PC-3 (cell line): ENCODE measurements at regions of chr2 and their contacts with region 1.

Region 1: DNA sequence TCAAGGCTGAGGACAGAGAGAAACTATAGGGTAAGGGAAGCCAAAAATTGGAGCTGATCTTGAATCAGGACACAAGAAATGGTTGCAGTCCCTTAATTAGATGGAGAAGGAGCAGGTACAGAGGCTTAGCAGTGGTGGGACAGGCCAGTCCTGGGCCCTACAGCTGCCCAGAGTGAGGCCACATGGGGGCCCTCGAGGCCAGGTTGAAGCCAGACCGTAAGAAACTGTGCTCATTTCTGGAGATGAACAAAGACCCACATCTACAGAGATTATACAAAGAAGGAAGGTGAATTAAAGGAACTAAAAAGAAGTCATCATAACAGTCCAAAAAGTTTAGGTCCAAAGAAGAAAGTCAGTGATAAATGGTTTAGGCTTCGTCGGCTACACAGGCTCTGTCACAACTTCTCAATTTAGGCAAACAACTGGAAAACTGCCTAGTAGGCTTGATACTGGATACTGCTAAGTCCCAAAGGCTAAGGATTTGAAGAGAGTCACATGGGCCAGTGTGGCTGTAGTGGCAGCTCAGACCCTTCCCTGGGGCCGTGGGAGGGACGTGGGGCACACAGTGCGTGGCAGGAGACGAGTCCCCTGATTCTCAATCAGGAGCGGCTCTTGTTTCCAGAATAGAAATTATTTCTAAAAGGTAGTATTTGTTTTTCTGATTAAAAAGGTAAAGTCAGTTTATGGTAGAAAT is 50.4 kb upstream of the CNGA3 start:
- DNase-seq: no peak
- ATAC-seq: peak; percentile 66
- H3K4me3 ChIP-seq: no peak overlapping the region
- H3K27ac ChIP-seq: no peak overlapping the region
- H3K4me1 ChIP-seq: peaks cover 21% of the 10 kb centered on the region
- H3K27me3 ChIP-seq: no peaks in the 10 kb centered on the region
- CTCF ChIP-seq: peak; percentile 50

Region 2: GRCh38 chr2:98356729-98357128 is 60.9 kb after region 1 on chr2:
- CTCF ChIA-PET with region 1: no interaction called
- POLR2A ChIA-PET with region 1: no interaction called
- intact Hi-C with region 1: loop called (anchors 10 kb)
- DNase-seq: peak; percentile 94
- ATAC-seq: peak; percentile 88
- H3K4me3 ChIP-seq: peak overlapping the region; percentile 13; the same call in 1 of the 2 replicates
- H3K27ac ChIP-seq: peak overlapping the region; percentile 81
- H3K4me1 ChIP-seq: peaks cover 31% of the 10 kb centered on the region
- H3K27me3 ChIP-seq: no peaks in the 10 kb centered on the region
- CTCF ChIP-seq: no peak

Region 3: DNA sequence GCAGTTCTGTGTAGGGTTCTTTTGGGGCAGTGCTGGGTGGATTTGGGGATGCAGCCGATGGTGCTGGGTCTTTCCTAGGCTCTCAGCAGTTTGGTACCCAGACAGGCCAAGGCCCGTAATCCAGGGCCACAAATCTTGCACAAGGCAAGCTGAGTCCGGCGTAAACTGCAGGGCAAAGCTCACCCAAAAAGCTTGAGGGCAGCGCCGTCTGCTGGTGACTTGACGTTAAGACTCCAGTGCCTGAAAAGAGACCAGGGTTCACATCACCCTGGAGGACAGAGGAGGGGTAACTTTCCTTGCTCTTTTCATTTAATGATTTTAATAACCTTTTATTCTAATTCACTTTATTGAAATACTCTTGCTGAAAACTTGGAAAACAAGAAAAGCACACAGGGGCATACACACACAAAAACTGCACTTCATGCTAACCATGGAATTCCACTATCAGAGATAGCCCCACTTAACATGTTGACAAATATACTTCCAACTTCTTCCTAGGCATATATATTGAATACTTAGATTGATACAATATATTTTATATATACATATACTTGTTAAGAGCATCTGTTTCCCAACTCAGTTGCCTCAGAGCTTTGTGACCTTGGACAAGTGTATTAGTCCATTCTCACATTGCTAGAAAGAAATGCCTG is 89.3 kb after region 1 on chr2:
- CTCF ChIA-PET with region 1: no interaction called
- POLR2A ChIA-PET with region 1: no interaction called
- intact Hi-C with region 1: loop called (anchors 1 kb)
- DNase-seq: peak; percentile 88
- ATAC-seq: peak; percentile 93
- H3K4me3 ChIP-seq: no peak overlapping the region
- H3K27ac ChIP-seq: no peak overlapping the region
- H3K4me1 ChIP-seq: no peaks in the 10 kb centered on the region
- H3K27me3 ChIP-seq: no peaks in the 10 kb centered on the region
- CTCF ChIP-seq: peak; percentile 97